ENCODE measurements at regions of chr20 and their contacts with region 1.

Region 1: DNA sequence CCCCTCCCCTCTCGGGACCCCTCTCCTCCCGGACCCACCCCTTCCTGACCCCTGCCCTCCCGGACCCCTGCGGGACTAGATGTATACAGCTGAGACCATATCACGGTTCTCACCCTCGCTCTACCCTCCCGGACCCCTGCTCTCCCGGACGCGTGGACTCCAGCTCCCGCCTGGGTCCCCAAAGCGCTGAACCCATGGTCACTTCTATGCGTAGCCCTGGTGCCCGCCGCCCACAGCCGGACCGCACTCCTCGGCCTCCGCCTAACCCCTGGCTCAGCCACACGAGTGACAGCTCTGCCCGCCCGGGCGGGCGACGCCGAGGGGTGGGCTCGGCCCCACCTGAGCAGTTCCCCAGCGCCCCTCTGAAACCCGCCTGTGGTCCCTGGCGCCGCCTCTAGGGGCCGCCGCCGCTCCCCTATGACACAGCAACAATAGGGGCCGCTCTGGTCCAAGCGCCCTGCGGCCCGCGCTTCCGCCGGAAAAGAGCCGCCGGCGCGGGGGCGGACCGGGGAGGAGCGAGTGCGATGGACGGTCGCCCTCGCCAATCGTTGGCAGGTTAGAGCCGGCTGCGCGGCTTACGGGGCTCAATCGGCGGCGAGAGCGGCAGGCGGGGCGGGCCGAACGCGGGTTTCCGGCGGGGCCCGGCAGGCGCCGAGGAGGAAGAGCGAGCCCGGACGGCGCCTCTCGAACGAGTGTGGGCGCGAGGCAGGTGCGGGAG is at the start of gene ADRM1:
- DNase-seq: peak; percentile 99
- H3K4me3 Mint-ChIP-seq: peak within 1 kb of the TSS; percentile 98
- H3K27ac Mint-ChIP-seq: peak within 1 kb of the TSS; percentile 100
- H3K4me1 Mint-ChIP-seq: peaks cover 20% of the 10 kb centered on the region
- H3K27me3 Mint-ChIP-seq: no peaks in the 10 kb centered on the region
- total RNA-seq, gene ADRM1: 179 and 183 TPM in 2 replicates

Region 2: GRCh38 chr20:62143118-62143973 is 159.2 kb before region 1 on chr20 and contains the starts of genes PSMA7 and SS18L1:
- intact Hi-C with region 1: loop called (anchors 2 kb)
- DNase-seq: peak; percentile 96
- H3K4me3 Mint-ChIP-seq: peak within 1 kb of the TSS; percentile 94
- H3K27ac Mint-ChIP-seq: peak within 1 kb of the TSS; percentile 91
- H3K4me1 Mint-ChIP-seq: peaks cover 35% of the 10 kb centered on the region
- H3K27me3 Mint-ChIP-seq: no peaks in the 10 kb centered on the region
- total RNA-seq, gene PSMA7: 434 and 449 TPM in 2 replicates
- total RNA-seq, gene SS18L1: 26.7 and 29.0 TPM in 2 replicates

Region 3: DNA sequence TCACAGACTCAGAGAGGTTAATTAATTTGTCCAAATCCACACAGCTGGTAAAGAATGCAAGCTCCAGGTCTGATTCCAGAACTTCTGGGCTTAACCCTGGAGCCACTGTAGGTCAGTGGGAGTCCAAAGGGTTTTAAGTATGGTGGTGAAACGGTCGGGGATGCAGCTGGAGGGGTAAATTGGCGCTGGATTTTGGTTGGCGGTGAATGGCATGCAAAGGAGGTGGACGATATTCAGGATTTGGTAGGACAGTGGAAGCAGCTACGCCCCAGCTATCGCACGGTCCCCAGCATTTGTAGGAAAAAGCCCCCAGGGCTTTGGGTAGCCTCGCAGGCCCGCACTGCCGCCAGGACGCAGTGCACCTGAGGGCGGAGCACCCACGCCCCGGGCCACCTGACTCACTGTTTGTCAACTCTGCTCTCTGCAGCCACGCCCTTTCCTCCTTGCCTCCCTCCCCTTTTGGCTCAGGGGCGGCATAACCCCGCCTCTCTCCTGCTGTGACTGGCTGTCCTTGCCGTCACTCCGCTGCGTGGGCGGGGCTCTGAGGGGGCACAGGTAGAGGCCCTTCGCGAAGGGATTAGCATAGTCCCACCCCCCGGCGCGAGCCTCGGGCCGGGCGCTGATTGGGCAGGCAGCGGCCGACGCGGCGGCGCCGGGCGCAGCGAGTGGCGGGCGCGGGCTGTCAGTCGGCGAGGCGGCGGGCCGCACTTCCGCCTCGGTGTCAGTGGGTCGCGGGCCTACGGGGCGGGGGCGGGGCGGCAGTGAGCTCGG is 64.5 kb before region 1 on chr20 and contains the start of gene OSBPL2:
- intact Hi-C with region 1: loop called (anchors 1 kb)
- DNase-seq: peak; percentile 100
- H3K4me3 Mint-ChIP-seq: peak within 1 kb of the TSS; percentile 81
- H3K27ac Mint-ChIP-seq: peak within 1 kb of the TSS; percentile 78
- H3K4me1 Mint-ChIP-seq: peaks cover 26% of the 10 kb centered on the region
- H3K27me3 Mint-ChIP-seq: no peaks in the 10 kb centered on the region
- total RNA-seq, gene OSBPL2: 29.0 and 29.2 TPM in 2 replicates

Region 4: DNA sequence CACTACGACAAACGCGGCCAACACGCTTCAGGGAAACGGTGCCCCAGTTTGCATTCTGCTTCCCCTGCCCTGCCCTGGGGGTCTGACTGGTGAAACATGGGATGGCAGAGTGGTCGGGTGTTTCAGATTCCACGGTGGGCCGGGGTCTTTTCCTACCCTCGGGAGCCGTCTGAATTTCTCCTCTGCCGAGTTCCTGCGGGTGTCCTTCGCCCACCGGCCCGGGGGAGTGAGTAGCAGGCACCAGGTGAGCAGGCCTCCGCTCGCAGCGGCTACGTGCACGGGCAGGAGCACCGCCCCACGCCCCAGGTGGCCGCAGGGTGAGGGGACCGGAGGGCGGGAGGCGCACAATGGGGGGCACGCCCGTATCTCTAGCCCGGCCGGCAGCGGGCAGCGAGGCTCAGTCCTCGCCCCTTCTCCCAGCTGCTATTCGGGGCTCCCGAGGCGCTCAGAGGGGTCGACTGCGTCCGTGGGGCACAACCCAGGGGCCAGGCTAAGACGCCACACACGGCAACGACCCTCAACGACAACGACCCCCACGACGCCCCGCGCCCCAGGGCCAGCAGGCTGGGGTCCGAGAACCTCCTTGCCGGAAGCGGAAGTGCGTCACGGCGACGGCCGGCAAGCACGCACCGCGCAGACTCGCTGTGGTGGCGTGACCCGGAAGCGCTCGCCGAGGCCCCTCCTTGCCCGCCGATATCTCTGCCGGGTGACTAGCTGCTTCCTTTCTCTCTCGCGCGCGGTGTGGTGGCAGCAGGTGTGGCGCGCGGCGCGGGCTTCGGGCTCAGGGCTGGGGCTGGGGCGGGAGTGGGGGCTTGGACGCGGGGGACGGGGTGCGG is 84.1 kb after region 1 on chr20 and contains the start of gene RPS21:
- intact Hi-C with region 1: loop called (anchors 1 kb)
- DNase-seq: peak; percentile 98
- H3K4me3 Mint-ChIP-seq: peak within 1 kb of the TSS; percentile 98
- H3K27ac Mint-ChIP-seq: peak within 1 kb of the TSS; percentile 94
- H3K4me1 Mint-ChIP-seq: peaks cover 37% of the 10 kb centered on the region
- H3K27me3 Mint-ChIP-seq: no peaks in the 10 kb centered on the region
- total RNA-seq, gene RPS21: 2,091 and 2,109 TPM in 2 replicates

Region 5: GRCh38 chr20:62500237-62500864 is 197.9 kb after region 1 on chr20:
- intact Hi-C with region 1: loop called (anchors 5 kb)
- DNase-seq: peak; percentile 94
- H3K4me3 Mint-ChIP-seq: peak overlapping the region; percentile 9
- H3K27ac Mint-ChIP-seq: peak overlapping the region; percentile 98
- H3K4me1 Mint-ChIP-seq: peaks cover 32% of the 10 kb centered on the region
- H3K27me3 Mint-ChIP-seq: no peaks in the 10 kb centered on the region